ENCODE measurements at regions of chr17 and their contacts with region 1.

Region 1: GRCh38 chr17:66673668-66674315 is 161.1 kb upstream of the CACNG5 start:
- DNase-seq: peak in 6 of 10 donors; percentile 35 to 64 (median 53)
- H3K4me3 ChIP-seq: peak overlapping the region in 1 of 59 donors; percentile 4
- H3K27ac ChIP-seq: peak overlapping the region in 54 of 59 donors; percentile 3 to 95 (median 81)
- H3K27me3 ChIP-seq: no peaks in the 10 kb centered on the region
- CTCF ChIP-seq: peak; percentile 66 to 92 (median 82)

Region 2: GRCh38 chr17:66200685-66201092 is 473.1 kb before region 1 on chr17:
- intact Hi-C with region 1: loop called in 1 of 2 experiments (anchors 5 kb)
- DNase-seq: peak in 4 of 10 donors; percentile 9 to 45 (median 42)
- H3K4me3 ChIP-seq: no peak overlapping the region
- H3K27ac ChIP-seq: no peak overlapping the region
- H3K27me3 ChIP-seq: no peaks in the 10 kb centered on the region
- CTCF ChIP-seq: peak in 53 of 56 donors; percentile 13 to 70 (median 51)

Region 3: DNA sequence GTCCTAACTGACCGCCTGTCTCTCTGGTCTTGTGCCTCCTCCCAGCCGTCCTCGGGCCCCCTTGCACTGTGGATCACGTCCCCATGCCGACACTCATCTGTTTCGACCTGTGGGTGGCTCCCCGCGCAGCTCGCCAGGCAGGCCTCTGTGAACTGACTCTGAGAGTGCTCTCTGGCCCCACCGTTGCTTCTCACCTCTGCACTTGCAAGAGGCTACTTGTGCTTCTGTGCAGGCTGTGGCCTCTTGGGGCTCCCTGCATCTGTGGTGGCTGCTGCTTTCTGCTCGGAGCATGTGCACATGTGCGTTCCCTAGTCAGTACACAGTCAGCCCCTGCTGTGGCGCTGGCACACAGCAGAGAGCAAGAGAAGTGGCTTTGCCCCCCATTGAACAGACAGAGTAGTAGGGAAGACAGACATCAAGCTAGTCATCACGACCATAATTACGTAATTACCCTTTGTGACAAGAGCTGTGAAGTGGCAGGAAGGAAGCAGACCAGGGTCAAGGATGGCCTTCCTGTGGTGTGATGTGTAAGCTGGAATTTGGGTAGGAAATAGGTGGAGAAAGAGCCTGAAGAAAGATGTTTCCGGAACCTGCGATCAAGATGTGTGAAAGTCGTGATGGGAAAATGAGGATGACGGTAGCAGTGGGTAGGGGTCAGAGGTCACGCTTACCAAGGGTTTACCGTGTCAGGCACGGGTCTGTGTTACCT is 94.9 kb before region 1 on chr17:
- intact Hi-C with region 1: loop called in 1 of 2 experiments (anchors 10 kb)
- DNase-seq: no peak
- H3K4me3 ChIP-seq: no peak overlapping the region
- H3K27ac ChIP-seq: peak overlapping the region in 14 of 59 donors; percentile 1 to 67 (median 26)
- H3K27me3 ChIP-seq: no peaks in the 10 kb centered on the region
- CTCF ChIP-seq: no peak

Measured in dorsolateral prefrontal cortex (tissue), 120 donors.